Posterior cingulate gyrus (tissue), 11 donors: ENCODE measurements at regions of chr11 and their contacts with region 1.

Region 1: GRCh38 chr11:35617687-35618496 is at the start of gene FJX1:
- DNase-seq: peak; percentile 26 to 91 (median 36)

Region 2: DNA sequence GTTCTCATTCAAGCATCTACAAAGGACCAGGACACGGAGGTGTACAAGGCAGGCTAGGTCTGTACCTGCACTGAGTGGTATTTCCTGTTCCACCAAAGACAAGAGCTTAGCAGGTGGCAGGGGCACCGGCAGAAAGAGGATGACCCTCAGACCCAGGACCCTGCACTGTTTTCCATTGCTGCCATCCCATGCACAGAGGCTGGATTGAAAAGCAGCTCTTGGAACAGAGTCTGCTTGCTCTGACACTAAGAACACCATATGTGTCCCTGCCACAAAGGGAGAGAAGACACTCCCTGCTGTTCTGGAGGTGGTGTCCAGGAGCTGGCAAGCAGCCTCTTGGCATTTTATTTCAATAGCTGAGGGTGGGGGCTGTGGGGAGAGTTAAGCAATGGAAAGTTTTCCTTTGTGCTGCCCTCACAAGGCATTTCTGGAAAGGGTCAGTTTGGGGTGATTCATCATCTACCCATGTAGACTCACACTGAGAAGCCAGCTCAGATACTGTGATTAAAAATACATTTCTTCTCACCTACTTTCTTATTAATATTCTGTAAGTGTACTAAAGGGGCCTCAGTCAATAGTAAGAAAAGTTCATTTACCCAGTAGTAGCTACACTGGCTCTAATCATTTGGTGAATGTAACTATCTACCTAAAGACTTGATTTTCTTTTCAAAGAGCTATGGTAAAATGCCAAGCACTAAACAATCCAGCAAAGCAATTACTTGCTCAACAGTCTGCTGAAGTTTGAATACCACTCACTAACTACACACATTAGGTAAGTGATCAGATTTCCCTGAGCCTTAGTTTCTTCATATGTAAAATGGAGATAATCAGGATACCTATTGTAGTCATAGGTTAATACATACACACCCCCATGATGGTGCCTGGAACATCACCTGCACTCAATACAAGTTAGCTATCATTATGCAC is 253.8 kb before region 1 on chr11:
- intact Hi-C with region 1: no loop called
- DNase-seq: peak in 5 of 10 donors; percentile 29 to 87 (median 50)

Region 3: DNA sequence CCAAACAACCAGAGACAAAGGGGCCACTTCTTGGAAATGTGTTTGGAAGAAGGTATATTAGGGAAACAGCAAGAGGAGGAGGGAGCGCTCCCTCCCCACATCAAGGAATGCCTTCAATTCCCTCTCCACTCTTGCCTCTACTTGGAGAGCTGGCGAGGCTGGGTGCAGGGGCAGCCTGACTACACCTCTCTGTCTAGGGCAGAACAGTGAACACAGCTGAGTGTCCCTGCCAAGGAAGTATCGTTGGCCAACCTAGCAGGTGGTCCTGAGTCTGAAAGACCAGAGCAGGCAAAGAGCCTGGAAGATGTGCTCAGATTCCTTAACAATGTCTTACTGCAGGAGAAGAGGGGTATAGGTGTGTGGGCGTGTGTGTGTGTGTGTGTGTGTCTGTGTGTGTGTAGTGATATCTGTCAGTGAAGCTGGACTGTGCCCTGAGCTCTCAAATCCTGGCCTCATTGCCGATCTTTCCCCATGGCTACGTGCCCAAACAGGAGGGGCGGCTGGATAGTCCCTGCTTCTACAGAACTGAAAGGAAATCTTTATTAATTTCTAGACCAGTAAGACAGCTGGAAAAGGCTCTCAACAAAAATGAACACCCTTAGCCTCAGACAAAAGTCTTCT is 139.3 kb before region 1 on chr11:
- intact Hi-C with region 1: no loop called
- DNase-seq: peak in 9 of 10 donors; percentile 19 to 89 (median 70)

Region 4: GRCh38 chr11:35662649-35663407 is 44.9 kb after region 1 on chr11 and contains the start of gene TRIM44:
- intact Hi-C with region 1: loop called (anchors 1 kb)
- DNase-seq: peak; percentile 75 to 97 (median 85)

Region 5: DNA sequence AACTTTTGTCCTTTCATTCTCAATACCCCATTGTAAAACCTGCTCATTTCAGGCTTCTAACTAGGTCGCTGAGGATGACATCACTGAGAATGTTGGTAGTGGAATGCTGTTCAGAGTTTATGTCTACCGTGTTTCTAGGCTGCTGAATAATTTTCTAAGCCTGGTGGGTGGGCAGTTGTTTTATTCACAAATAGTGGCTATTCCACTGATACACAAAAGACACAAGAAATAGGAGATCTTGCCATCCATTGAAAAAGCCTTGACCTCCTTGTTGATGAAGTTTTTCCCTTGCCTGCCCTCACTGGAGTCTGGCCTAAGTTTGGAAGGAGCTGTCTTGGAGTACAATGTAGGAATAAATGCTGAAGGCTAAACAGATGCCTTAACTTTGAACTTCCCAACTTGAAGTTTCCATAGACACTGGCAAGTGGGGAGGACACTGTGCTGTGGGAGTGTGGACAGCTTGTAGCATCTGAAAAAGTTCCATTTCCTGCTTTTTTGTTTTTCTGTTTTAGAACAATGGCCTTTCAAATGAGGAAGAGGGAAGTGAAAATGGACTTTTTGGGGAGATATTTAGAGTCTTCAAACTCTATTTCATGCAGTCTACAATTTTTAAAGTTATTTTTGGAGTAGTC is 103.9 kb after region 1 on chr11:
- intact Hi-C with region 1: no loop called
- DNase-seq: no peak

Region 6: DNA sequence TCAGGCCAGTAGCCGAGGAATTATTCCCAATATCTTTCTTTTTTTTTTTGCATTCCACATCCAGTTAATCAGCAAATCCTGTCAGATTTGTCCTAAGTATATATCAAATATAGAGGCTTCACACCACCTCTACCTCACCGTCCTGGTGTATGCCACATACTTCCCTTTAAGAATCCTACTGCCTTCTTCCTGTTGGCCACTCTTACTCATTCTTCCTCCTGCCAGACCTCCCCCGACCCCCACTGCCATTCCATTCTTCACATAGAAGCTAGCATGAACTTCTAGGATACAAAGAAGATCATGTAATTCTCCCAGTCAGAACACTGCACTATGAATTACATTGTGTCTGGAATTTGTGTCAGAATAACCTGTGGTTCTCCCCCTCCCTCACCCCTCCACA is 134.2 kb after region 1 on chr11:
- intact Hi-C with region 1: no loop called
- DNase-seq: no peak

Region 7: GRCh38 chr11:36041988-36042611 is 424.2 kb after region 1 on chr11:
- intact Hi-C with region 1: loop called (anchors 10 kb)
- DNase-seq: no peak

Region 8: GRCh38 chr11:36265793-36266628 is 648.1 kb after region 1 on chr11:
- intact Hi-C with region 1: loop called (anchors 1 kb)
- DNase-seq: peak in 6 of 10 donors; percentile 46 to 91 (median 55)

Region 9: DNA sequence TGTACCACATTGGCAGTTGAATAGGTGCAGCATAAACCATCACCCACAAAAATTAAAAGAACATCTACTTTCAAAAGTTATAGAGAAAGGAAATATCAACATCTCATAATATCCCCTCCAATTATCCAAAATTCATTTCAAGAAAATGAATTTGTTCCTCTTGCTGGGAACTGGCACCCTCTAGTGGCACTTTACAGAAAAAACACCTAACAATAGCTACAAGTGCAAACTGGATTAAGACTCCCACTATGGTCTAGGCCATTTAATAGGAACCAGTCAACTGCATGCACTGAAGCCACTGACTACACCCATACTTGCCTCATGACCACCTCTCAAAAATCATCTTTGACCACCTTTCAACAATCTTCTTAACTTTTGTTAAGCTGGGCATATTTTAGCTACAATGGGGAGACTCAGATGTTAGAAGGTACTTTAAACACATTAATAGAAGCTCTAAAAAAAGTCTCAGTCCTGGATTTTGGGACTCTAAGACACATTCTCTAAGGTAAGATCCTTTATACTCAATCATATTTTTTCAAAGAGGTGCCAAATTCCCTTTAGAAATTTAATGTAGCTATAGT is 874.9 kb after region 1 on chr11:
- intact Hi-C with region 1: loop called (anchors 5 kb)
- DNase-seq: peak in 1 of 10 donors; percentile 8